ENCODE measurements at regions of chr6 and their contacts with region 1.

Region 1: DNA sequence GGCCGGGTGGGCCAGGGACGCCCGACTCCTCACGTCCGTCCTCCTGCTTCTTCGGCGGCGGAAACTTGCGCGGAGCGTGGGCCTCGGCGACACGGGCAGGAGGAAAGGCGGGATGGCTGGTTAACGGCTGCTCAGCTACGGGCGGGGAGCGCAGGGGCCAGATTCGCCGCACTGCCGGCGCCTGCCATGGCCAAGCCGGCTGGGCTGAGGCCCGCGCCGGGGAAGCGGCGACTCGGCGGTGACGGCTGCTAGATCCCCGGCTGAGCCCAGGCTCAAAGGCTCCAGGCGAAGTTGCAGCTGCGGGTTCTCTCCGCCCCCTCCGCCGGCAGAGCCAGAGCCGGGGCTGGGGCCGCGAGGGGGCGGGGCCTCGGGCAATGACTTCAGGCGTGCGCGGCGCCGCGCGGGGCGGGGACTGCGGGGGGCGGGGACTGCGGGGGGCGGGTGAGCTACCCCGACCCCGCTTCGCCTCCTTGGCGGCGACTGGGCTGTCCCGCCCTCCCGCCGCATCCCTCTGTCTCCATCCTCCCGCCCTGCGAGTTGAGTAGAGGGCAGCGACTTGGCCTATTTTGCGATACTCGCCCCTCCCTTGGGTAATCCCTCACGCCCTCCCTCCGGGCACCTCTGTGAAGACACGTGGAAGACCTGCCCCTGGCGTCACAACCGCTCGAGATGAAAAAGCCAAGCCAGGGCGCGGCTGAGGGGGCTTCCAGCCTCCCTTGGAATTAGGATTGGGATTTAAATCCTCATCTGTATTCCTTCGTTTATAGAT is at the start of gene CEP85L:
- DNase-seq: peak; percentile 82 to 99 (median 92)

Region 2: GRCh38 chr6:118709859-118710350 is 58.4 kb after region 1 on chr6:
- intact Hi-C with region 1: loop called (anchors 5 kb)
- DNase-seq: no peak

Region 3: GRCh38 chr6:118776607-118777549 is 125.4 kb after region 1 on chr6:
- intact Hi-C with region 1: loop called (anchors 10 kb)
- DNase-seq: peak in 5 of 10 donors; percentile 22 to 62 (median 54)

Region 4: GRCh38 chr6:118893807-118894424 is 242.4 kb after region 1 on chr6 and contains the start of gene ASF1A:
- intact Hi-C with region 1: loop called (anchors 2 kb)
- DNase-seq: peak; percentile 95 to 99 (median 96)